ENCODE measurements at regions of chr2 and their contacts with region 1.

Region 1: DNA sequence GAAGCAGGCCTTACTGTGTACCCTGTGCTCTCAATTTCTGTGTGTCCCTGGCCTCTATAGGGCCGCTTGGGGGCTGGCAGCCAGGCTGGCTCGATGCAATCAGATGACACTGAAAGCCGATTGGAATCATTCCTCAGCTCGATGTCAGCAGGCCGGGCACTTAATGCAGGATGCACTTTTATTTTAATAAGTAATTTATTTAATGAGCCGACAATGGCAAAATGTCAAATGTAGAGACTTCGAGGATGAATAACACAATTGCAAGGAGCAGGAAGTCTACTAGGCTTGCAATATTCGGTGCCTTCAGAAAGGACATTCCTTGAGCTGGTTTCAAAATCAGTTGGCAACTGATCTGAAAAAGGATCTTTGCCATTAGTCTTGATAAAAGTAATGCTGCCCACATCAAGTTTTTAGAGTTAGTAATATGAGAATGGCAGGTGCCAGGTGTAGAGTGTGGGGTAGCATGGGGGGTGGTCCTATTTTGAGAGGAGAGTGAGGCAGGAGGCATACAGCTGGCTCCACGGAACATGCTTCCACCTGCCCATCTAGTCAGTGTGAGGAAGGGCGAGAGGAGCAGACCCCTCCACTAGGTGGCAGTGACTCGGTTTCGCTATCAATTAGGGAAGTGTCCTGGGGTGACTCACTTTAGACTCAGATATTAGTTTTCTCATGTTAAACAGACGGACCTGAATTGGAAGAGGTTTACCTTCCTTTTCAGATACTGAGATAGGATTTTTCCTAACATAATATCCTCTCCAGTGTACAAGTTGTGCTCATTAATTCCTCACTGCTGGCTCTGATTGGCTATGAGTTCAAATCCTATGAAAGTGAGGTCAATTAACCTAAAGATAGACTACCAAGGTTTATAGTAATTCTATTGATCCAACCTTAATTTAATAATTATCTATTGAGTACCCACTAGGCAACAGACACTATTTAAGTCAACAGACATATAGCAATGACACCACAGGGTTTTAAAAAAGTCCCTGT is 80.9 kb downstream of the NABP1 start:
- DNase-seq: peak; percentile 68
- ATAC-seq: peak; percentile 90
- H3K4me3 Mint-ChIP-seq: no peak overlapping the region
- H3K27ac Mint-ChIP-seq: no peak overlapping the region
- H3K4me1 Mint-ChIP-seq: peaks cover 5% of the 10 kb centered on the region
- H3K27me3 Mint-ChIP-seq: peaks cover 15% of the 10 kb centered on the region

Region 2: GRCh38 chr2:191748059-191748461 is 10.8 kb before region 1 on chr2:
- CTCF ChIA-PET with region 1: interaction called, 10 read pairs
- POLR2A ChIA-PET with region 1: no interaction called
- intact Hi-C with region 1: no loop called
- DNase-seq: no peak
- ATAC-seq: peak; percentile 36
- H3K4me3 Mint-ChIP-seq: no peak overlapping the region
- H3K27ac Mint-ChIP-seq: no peak overlapping the region
- H3K4me1 Mint-ChIP-seq: peaks cover 11% of the 10 kb centered on the region
- H3K27me3 Mint-ChIP-seq: peaks cover 17% of the 10 kb centered on the region

Measured in activated CD4-positive, alpha-beta T cell treated with anti-CD3 and anti-CD28 coated beads for 36 hours (primary cell).